ENCODE measurements at regions of chr3 and their contacts with region 1.

Region 1: GRCh38 chr3:173395412-173396181 is 1.9 kb upstream of the NLGN1 start:
- DNase-seq: peak; percentile 32
- H3K4me3 Mint-ChIP-seq: peak overlapping the region; percentile 80
- H3K27ac Mint-ChIP-seq: peak overlapping the region; percentile 23
- H3K4me1 Mint-ChIP-seq: peaks cover 25% of the 10 kb centered on the region
- H3K27me3 Mint-ChIP-seq: peaks cover 62% of the 10 kb centered on the region

Region 2: GRCh38 chr3:173584838-173585831 is 189.5 kb after region 1 on chr3:
- intact Hi-C with region 1: loop called (anchors 5 kb)
- DNase-seq: no peak
- H3K4me3 Mint-ChIP-seq: no peak overlapping the region
- H3K27ac Mint-ChIP-seq: no peak overlapping the region
- H3K4me1 Mint-ChIP-seq: peaks cover 9% of the 10 kb centered on the region
- H3K27me3 Mint-ChIP-seq: peaks cover 20% of the 10 kb centered on the region

Region 3: GRCh38 chr3:174440741-174441587 is 1045.4 kb after region 1 on chr3:
- intact Hi-C with region 1: loop called (anchors 5 kb)
- DNase-seq: peak; percentile 19
- H3K4me3 Mint-ChIP-seq: peak overlapping the region; percentile 76
- H3K27ac Mint-ChIP-seq: no peak overlapping the region
- H3K4me1 Mint-ChIP-seq: peaks cover 10% of the 10 kb centered on the region
- H3K27me3 Mint-ChIP-seq: peaks cover 19% of the 10 kb centered on the region